Brain microvascular endothelial cell (primary cell): ENCODE measurements at regions of chr4 and their contacts with region 1.

Region 1: DNA sequence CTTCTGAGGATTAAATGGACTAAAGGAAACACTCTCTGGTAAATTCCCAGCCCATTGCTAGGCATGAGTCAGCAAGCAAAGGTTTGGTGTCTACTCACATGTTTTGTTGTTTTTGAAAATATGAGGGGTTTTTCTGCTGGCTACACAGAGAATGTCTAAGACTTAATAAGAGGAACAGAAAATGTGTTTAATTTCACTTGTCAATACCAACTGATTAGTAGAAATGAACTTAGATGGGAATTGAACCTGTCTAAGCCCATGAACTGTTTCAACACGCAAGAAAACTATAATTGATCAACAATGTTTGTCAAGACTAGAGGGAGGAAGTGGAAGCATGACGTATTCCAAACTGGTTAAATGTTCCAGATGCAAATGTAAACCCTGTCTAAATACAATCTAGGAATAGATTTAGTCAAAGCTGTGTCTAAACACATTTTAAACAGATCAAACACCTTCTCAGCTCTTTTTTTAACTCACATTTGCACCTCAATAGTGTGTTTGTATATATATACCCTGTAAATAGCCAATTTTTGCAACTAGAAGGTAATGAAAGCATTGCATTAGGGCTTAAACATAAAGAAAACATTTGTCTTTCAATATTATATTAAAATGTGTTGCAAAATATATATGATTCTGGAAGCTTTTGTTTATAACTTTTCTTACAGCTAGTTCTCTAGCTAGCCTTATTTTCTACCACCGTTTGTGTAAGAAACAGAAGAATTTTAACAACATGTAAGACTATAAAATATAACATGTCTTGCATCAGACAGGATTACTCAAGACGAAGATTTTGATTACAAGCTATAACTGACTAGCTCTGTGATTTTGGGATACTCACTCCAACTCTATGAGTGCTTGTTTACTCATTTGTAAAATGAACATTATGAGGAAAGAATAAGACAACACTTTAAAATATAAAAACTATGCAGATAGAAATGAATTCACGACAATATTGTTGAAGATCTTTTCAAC is 607.8 kb downstream of the FSTL5 start:
- DNase-seq: peak; percentile 83
- H3K4me3 ChIP-seq: no peak overlapping the region
- H3K27ac ChIP-seq: peak overlapping the region; percentile 67
- H3K27me3 ChIP-seq: no peaks in the 10 kb centered on the region
- CTCF ChIP-seq: no peak

Region 2: DNA sequence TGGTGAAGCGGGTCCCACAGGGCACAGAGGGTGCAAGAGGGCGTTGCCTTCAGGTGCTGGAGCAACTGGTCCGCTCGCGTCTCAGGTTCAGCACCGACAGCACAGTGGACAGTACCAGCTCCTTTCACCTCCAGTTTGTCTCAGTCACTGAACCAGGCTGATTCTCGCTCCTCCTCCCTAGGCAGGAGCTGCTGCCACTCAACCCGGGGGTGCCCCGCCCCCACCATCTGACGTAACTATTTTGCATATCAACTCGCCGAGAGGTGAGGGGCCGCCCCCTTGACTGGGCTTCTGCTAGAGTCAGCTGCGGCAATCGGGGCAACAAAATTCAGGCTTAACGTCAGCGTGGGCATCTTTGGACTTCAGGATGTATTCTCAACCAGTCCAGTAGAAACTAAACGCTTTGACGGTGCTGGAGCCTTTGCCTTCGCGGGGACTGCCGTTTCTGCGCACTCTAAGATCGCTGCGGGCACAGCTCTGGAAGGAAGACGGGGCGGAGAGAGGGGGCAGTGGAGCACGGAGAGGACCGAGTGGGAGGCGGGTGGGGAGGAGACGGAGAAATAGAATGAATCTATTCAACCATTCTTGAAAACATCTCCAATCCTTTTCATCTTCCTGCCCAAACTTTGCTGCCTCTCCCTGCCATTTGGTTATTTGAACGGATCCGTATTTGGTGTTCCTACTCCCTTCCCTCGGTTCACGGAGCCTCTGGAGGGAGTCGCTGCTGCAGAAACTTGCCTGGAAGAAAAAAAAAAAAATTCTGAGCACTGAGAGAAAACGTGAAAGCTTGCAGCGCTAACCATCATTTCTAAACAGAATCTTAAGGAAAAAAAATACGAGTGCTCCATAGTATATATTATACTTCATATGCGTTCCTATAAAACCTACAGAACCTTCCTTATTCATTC is 608.1 kb after region 1 on chr4 and contains the start of gene FSTL5:
- in situ Hi-C with region 1: loop called (anchors 25 kb)
- DNase-seq: peak; percentile 74
- H3K4me3 ChIP-seq: peak within 1 kb of the TSS; percentile 72
- H3K27ac ChIP-seq: no peak within 1 kb of the TSS
- H3K27me3 ChIP-seq: no peaks in the 10 kb centered on the region
- CTCF ChIP-seq: no peak